Naive thymus-derived CD4-positive, alpha-beta T cell (primary cell): ENCODE measurements at regions of chr7 and their contacts with region 1.

Region 1: GRCh38 chr7:29408841-29409243 is 154.8 kb upstream of the PRR15 start:
- DNase-seq: peak in 8 of 9 donors; percentile 22 to 67 (median 52)
- ATAC-seq: peak; percentile 70
- H3K4me3 ChIP-seq: no peak overlapping the region
- H3K4me3 Mint-ChIP-seq: no peak overlapping the region
- H3K27ac ChIP-seq: no peak overlapping the region
- H3K27ac Mint-ChIP-seq: no peak overlapping the region
- H3K4me1 ChIP-seq: no peaks in the 10 kb centered on the region
- H3K4me1 Mint-ChIP-seq: no peaks in the 10 kb centered on the region
- H3K27me3 ChIP-seq: no peaks in the 10 kb centered on the region
- H3K27me3 Mint-ChIP-seq: peaks cover 0 to 8% (median 0%) of the 10 kb centered on the region in 5 donors

Region 2: GRCh38 chr7:28865601-28866144 is 543.2 kb before region 1 on chr7:
- CTCF ChIA-PET with region 1: no interaction called
- POLR2A ChIA-PET with region 1: no interaction called
- intact Hi-C with region 1: no loop called
- DNase-seq: no peak
- ATAC-seq: no peak
- H3K4me3 ChIP-seq: no peak overlapping the region
- H3K4me3 Mint-ChIP-seq: no peak overlapping the region
- H3K27ac ChIP-seq: no peak overlapping the region
- H3K27ac Mint-ChIP-seq: no peak overlapping the region
- H3K4me1 ChIP-seq: no peaks in the 10 kb centered on the region
- H3K4me1 Mint-ChIP-seq: no peaks in the 10 kb centered on the region
- H3K27me3 ChIP-seq: peaks cover 0 to 5% of the 10 kb centered on the region in 2 donors
- H3K27me3 Mint-ChIP-seq: peaks cover 5 to 45% (median 31%) of the 10 kb centered on the region in 5 donors

Region 3: DNA sequence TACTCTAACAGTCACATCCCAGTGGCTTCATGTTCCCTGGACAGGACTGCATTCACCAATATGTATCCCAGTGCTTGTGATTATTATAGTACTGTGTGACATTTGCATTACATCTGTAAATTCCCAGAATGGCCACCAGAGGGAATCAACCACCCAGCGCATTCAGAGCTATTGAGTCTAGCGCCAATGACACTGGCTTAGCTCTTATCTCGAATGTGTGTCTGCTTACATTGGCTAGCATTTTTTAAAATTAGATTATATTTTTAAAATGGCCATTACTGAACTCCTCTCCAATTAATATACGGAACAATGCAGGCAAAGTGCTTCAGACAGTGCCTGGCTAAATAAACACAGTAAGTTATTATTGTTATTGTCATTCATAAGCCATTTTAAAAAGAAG is 487.0 kb before region 1 on chr7:
- CTCF ChIA-PET with region 1: interaction called, 39 read pairs
- POLR2A ChIA-PET with region 1: no interaction called
- intact Hi-C with region 1: loop called (anchors 1 kb)
- DNase-seq: peak in 7 of 9 donors; percentile 17 to 56 (median 39)
- ATAC-seq: peak; percentile 88
- H3K4me3 ChIP-seq: no peak overlapping the region
- H3K4me3 Mint-ChIP-seq: peak overlapping the region in 1 of 10 donors; percentile 16
- H3K27ac ChIP-seq: no peak overlapping the region
- H3K27ac Mint-ChIP-seq: no peak overlapping the region
- H3K4me1 ChIP-seq: peaks cover 0 to 8% of the 10 kb centered on the region in 2 donors
- H3K4me1 Mint-ChIP-seq: peaks cover 0 to 23% (median 14%) of the 10 kb centered on the region in 7 donors
- H3K27me3 ChIP-seq: no peaks in the 10 kb centered on the region
- H3K27me3 Mint-ChIP-seq: peaks cover 0 to 22% (median 0%) of the 10 kb centered on the region in 5 donors

Region 4: GRCh38 chr7:28926871-28927597 is 481.8 kb before region 1 on chr7:
- CTCF ChIA-PET with region 1: interaction called, 39 read pairs
- POLR2A ChIA-PET with region 1: no interaction called
- intact Hi-C with region 1: loop called in 1 of 2 experiments (anchors 1 kb)
- DNase-seq: peak; percentile 16 to 72 (median 60)
- ATAC-seq: peak; percentile 93
- H3K4me3 ChIP-seq: peak overlapping the region; percentile 57
- H3K4me3 Mint-ChIP-seq: peak overlapping the region; percentile 79 to 97 (median 90)
- H3K27ac ChIP-seq: no peak overlapping the region
- H3K27ac Mint-ChIP-seq: peak overlapping the region in 8 of 9 donors; percentile 9 to 92 (median 53)
- H3K4me1 ChIP-seq: peaks cover 4 to 12% of the 10 kb centered on the region in 2 donors
- H3K4me1 Mint-ChIP-seq: peaks cover 0 to 36% (median 23%) of the 10 kb centered on the region in 7 donors
- H3K27me3 ChIP-seq: no peaks in the 10 kb centered on the region
- H3K27me3 Mint-ChIP-seq: peaks cover 3 to 29% (median 7%) of the 10 kb centered on the region in 5 donors

Region 5: GRCh38 chr7:29105752-29106668 is 302.8 kb before region 1 on chr7:
- CTCF ChIA-PET with region 1: interaction called, 3 read pairs
- POLR2A ChIA-PET with region 1: no interaction called
- intact Hi-C with region 1: loop called (anchors 1 to 2 kb)
- DNase-seq: peak in 4 of 9 donors; percentile 4 to 33 (median 14)
- ATAC-seq: peak; percentile 69
- H3K4me3 ChIP-seq: no peak overlapping the region
- H3K4me3 Mint-ChIP-seq: no peak overlapping the region
- H3K27ac ChIP-seq: no peak overlapping the region
- H3K27ac Mint-ChIP-seq: no peak overlapping the region
- H3K4me1 ChIP-seq: no peaks in the 10 kb centered on the region
- H3K4me1 Mint-ChIP-seq: peaks cover 0 to 5% (median 3%) of the 10 kb centered on the region in 7 donors
- H3K27me3 ChIP-seq: no peaks in the 10 kb centered on the region
- H3K27me3 Mint-ChIP-seq: peaks cover 0 to 19% (median 16%) of the 10 kb centered on the region in 5 donors

Region 6: DNA sequence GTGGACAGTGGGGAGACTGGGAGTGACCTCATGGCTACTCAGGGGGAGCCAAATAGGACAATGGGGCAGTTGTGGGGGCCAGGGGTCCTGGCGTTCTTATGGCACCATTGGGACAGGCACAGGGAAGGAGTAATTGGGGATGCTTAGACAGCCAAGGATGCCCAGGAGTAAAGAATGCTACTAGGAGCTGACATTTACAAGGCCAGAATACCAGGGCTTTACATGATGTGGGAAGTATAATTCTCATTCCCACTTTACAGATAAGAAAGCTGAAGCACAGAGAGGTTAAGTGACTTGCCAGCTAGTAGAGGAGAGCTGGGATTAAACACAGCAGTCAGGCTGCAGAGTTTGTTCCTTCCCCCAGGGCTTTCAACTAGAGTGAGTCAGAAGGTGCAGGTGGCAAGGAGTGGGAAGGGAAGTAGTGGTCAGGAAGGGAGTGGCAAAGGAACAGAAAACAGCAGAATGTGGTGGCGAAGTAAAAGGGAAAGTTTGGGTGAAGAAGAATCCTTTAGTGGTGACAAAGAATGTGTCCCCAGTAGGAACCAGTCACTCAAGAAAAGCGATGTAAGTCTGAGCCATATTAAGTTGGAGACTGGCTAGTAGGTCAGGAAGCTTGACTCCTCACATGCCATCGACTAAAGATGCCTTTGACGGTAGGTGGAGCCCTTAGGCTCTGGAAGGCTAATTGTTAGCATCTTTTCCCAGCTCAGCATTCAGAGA is 295.3 kb before region 1 on chr7:
- CTCF ChIA-PET with region 1: no interaction called
- POLR2A ChIA-PET with region 1: no interaction called
- intact Hi-C with region 1: loop called in 1 of 2 experiments (anchors 1 kb)
- DNase-seq: no peak
- ATAC-seq: peak; percentile 65
- H3K4me3 ChIP-seq: no peak overlapping the region
- H3K4me3 Mint-ChIP-seq: no peak overlapping the region
- H3K27ac ChIP-seq: no peak overlapping the region
- H3K27ac Mint-ChIP-seq: peak overlapping the region in 1 of 9 donors; percentile 1
- H3K4me1 ChIP-seq: no peaks in the 10 kb centered on the region
- H3K4me1 Mint-ChIP-seq: peaks cover 0 to 11% (median 6%) of the 10 kb centered on the region in 7 donors
- H3K27me3 ChIP-seq: no peaks in the 10 kb centered on the region
- H3K27me3 Mint-ChIP-seq: peaks cover 4 to 48% (median 18%) of the 10 kb centered on the region in 5 donors

Region 7: GRCh38 chr7:29189743-29190201 is 219.1 kb before region 1 on chr7:
- CTCF ChIA-PET with region 1: interaction called, 34 read pairs
- POLR2A ChIA-PET with region 1: no interaction called
- intact Hi-C with region 1: loop called (anchors 1 kb)
- DNase-seq: peak in 7 of 9 donors; percentile 9 to 50 (median 23)
- ATAC-seq: peak; percentile 71
- H3K4me3 ChIP-seq: no peak overlapping the region
- H3K4me3 Mint-ChIP-seq: no peak overlapping the region
- H3K27ac ChIP-seq: no peak overlapping the region
- H3K27ac Mint-ChIP-seq: no peak overlapping the region
- H3K4me1 ChIP-seq: no peaks in the 10 kb centered on the region
- H3K4me1 Mint-ChIP-seq: peaks cover 0 to 13% (median 0%) of the 10 kb centered on the region in 7 donors
- H3K27me3 ChIP-seq: no peaks in the 10 kb centered on the region
- H3K27me3 Mint-ChIP-seq: peaks cover 25 to 58% (median 53%) of the 10 kb centered on the region in 5 donors

Region 8: DNA sequence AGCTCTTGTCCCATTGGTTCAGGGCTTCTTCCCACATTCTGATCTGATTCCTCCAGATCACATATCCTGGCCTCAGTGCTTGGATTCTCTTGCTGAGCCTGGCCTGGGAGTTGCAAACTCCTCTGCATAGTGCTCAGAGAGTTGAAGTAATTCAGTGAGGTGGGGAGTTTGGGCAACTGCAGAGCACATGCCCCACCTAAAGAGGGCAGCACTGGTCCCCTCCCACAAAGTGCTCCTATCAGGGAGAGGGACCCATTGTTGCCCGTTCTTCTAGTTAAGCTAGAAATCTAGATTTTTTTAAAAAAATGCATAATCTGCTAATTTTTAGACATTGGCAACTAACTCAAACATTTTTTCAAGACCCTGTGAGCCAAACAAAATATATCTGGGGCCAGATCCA is 169.2 kb before region 1 on chr7:
- CTCF ChIA-PET with region 1: no interaction called
- POLR2A ChIA-PET with region 1: no interaction called
- intact Hi-C with region 1: loop called in 1 of 2 experiments (anchors 5 kb)
- DNase-seq: no peak
- ATAC-seq: no peak
- H3K4me3 ChIP-seq: no peak overlapping the region
- H3K4me3 Mint-ChIP-seq: no peak overlapping the region
- H3K27ac ChIP-seq: no peak overlapping the region
- H3K27ac Mint-ChIP-seq: no peak overlapping the region
- H3K4me1 ChIP-seq: peaks cover 0 to 7% of the 10 kb centered on the region in 2 donors
- H3K4me1 Mint-ChIP-seq: peaks cover 0 to 15% (median 9%) of the 10 kb centered on the region in 7 donors
- H3K27me3 ChIP-seq: no peaks in the 10 kb centered on the region
- H3K27me3 Mint-ChIP-seq: peaks cover 3 to 22% (median 5%) of the 10 kb centered on the region in 5 donors